ENCODE measurements at regions of chr2 and their contacts with region 1.

Region 1: DNA sequence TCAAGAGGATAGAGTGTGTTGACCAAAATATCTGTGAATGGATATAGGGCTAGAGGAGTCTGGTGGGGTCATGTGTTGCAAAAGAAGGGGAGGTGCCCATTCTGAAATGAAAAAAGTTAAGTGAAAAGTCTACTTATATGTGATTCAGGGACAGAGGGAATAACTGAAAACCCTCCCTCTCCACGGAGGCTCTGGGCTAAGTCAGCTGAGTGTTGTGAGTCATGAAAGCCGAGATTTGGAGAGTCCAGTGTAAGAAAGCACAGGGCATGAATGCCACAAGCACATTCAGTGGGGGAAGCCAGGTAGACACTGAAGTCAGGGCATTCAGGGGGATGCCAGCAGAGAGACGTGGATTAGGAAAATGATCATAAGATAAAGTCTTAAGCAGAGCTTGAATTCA is 871.9 kb downstream of the TSN start:
- DNase-seq: no peak

Region 2: GRCh38 chr2:122545821-122546220 is 81.6 kb before region 1 on chr2:
- intact Hi-C with region 1: loop called in 1 of 2 experiments (anchors 2 kb)
- DNase-seq: no peak

Measured in posterior vena cava (tissue), 2 donors.